ENCODE measurements at regions of chr14 and their contacts with region 1.

Region 1: DNA sequence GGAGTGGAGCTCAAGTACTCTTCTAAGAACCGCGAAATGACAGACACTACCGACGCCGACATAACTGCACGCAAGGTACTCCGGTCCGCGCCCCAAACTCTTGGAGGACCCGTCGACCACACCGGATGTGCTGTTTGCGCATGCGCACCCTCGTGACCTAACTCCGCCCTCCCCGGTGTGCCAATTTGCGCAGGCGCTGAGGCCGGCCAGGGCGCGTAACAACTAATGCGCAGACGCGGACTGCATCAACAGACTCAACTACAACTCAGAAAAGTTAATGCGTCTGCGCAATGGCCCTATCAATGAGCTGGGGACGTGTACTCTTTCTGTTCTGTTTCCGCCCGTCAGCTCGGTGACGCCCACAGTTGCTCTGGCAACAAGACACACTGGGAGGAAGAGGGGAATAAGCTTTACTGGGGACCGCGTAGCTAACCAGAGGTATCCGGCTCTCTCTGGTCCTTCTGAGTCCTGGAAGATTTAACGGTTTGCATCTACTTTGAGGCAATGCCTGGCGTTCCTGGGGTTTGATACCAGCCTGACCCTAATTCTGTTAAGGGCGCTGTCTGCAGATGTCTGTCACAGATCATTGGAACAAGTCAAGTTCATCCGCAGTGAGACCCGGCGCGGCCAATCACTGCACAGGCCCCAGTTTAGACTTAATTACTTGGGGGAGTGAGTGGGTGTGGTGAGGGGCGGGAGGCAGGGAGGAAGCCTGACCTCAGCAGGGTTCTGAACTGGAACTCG is at the start of gene DAD1:
- DNase-seq: peak; percentile 100
- ATAC-seq: peak; percentile 84
- H3K4me3 Mint-ChIP-seq: peak within 1 kb of the TSS; percentile 93
- H3K27ac Mint-ChIP-seq: peak within 1 kb of the TSS; percentile 97
- H3K4me1 Mint-ChIP-seq: peaks cover 72% of the 10 kb centered on the region
- H3K27me3 Mint-ChIP-seq: peaks cover 1% of the 10 kb centered on the region
- total RNA-seq, gene DAD1: 265 to 302 TPM

Region 2: GRCh38 chr14:22653012-22653621 is 63.8 kb after region 1 on chr14:
- CTCF ChIA-PET with region 1: interaction called, 17 read pairs
- POLR2A ChIA-PET with region 1: interaction called, 3 read pairs
- intact Hi-C with region 1: no loop called
- DNase-seq: peak; percentile 75
- ATAC-seq: peak; percentile 80
- H3K4me3 Mint-ChIP-seq: no peak overlapping the region
- H3K27ac Mint-ChIP-seq: no peak overlapping the region
- H3K4me1 Mint-ChIP-seq: no peaks in the 10 kb centered on the region
- H3K27me3 Mint-ChIP-seq: no peaks in the 10 kb centered on the region

Region 3: DNA sequence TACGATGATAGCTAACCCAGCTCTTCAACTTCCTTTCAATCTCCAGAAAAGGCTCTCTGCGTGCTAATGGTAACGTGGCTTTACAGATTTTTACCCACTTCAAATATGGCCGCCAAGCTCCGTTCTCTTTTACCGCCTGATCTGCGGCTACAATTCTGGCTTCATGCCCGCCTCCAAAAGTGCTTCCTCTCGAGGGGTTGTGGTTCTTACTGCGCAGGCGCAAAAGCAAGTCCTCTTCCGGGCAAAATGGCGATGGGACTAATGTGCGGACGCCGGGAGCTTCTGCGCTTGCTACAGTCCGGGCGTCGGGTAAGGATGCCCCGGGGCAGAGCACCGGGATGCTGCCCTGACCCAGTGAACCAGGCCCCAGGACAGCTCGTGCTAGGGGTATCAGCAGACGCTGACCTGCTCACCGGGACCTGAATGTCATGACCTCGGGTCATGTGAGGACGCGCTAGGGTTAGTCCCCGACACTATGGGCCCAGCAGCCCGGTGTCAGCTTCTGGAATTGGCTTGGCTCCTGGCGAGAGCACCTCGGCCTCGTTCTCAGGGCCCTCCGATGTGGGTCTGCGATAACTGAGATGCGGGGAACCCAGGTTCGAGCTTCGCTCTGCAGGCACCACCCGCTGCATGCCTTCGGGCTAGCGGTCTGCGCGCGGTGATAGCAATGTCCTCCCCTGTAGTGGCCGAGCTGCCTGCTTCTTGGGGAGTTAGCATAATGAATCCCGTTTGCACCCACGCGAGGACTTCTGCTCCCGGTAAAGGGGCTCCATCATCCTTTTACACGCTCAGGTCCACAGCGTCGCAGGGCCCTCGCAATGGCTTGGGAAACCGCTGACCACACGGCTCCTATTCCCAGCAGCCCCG is 177.4 kb after region 1 on chr14 and contains the start of gene OXA1L:
- CTCF ChIA-PET with region 1: interaction called, 6 read pairs
- POLR2A ChIA-PET with region 1: interaction called, 10 read pairs
- intact Hi-C with region 1: loop called (anchors 1 kb)
- DNase-seq: peak; percentile 98
- ATAC-seq: peak; percentile 87
- H3K4me3 Mint-ChIP-seq: peak within 1 kb of the TSS; percentile 90
- H3K27ac Mint-ChIP-seq: peak within 1 kb of the TSS; percentile 99
- H3K4me1 Mint-ChIP-seq: peaks cover 32% of the 10 kb centered on the region
- H3K27me3 Mint-ChIP-seq: no peaks in the 10 kb centered on the region
- total RNA-seq, gene OXA1L: 136 to 148 TPM

Region 4: DNA sequence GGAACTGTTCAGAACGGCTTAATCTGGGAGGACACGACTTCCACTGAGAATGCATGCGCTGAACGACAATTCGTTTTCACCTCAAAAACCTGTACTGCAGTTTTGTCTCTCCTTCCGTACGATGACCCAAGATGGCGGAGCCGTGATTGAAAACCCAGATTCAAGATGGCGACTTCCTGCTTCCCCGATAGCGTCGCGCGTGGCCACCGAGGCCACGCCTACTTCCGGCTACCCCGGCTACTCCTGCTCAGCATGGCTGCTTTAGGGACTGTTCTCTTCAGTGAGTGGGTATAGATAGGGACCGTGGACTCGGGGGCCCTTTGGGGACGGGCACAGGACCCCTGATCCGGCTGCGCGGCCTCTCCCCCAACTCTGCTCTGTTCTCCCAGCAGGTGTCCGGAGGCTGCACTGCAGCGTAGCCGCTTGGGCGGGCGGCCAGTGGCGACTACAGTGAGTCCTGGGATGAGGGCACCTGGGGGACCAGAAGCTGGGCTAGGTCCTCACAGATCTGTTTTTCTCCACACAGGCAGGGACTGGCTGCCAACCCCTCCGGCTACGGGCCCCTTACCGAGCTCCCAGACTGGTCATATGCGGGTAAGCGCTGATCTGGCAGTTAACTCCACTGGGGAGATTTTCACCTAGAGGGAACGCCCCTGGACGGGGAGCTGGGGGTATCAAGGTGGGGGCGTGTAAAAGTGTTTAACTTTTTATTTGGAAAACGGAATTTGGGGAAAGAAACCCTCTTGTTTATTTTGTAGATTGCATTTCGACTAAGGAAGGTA is 240.6 kb after region 1 on chr14 and contains the start of gene MRPL52:
- CTCF ChIA-PET with region 1: interaction called, 3 read pairs
- POLR2A ChIA-PET with region 1: interaction called, 3 read pairs
- intact Hi-C with region 1: loop called in 1 of 2 experiments (anchors 1 kb)
- DNase-seq: peak; percentile 94
- ATAC-seq: peak; percentile 92
- H3K4me3 Mint-ChIP-seq: peak within 1 kb of the TSS; percentile 82
- H3K27ac Mint-ChIP-seq: peak within 1 kb of the TSS; percentile 98
- H3K4me1 Mint-ChIP-seq: peaks cover 26% of the 10 kb centered on the region
- H3K27me3 Mint-ChIP-seq: no peaks in the 10 kb centered on the region
- total RNA-seq, gene MRPL52: 115 to 136 TPM

Region 5: GRCh38 chr14:22910916-22911315 is 321.6 kb after region 1 on chr14:
- CTCF ChIA-PET with region 1: no interaction called
- POLR2A ChIA-PET with region 1: no interaction called
- intact Hi-C with region 1: no loop called
- DNase-seq: no peak
- ATAC-seq: peak; percentile 68
- H3K4me3 Mint-ChIP-seq: no peak overlapping the region
- H3K27ac Mint-ChIP-seq: no peak overlapping the region
- H3K4me1 Mint-ChIP-seq: peaks cover 36% of the 10 kb centered on the region
- H3K27me3 Mint-ChIP-seq: no peaks in the 10 kb centered on the region

Region 6: GRCh38 chr14:22929104-22929847 is 340.0 kb after region 1 on chr14 and contains the start of gene PRMT5:
- CTCF ChIA-PET with region 1: interaction called, 3 read pairs
- POLR2A ChIA-PET with region 1: interaction called, 3 read pairs
- intact Hi-C with region 1: loop called (anchors 1 to 5 kb)
- DNase-seq: peak; percentile 99
- ATAC-seq: peak; percentile 98
- H3K4me3 Mint-ChIP-seq: no peak within 1 kb of the TSS
- H3K27ac Mint-ChIP-seq: no peak within 1 kb of the TSS
- H3K4me1 Mint-ChIP-seq: peaks cover 39% of the 10 kb centered on the region
- H3K27me3 Mint-ChIP-seq: no peaks in the 10 kb centered on the region
- total RNA-seq, gene PRMT5: 121 to 151 TPM

Region 7: GRCh38 chr14:23034483-23035302 is 445.4 kb after region 1 on chr14 and contains the start of gene PSMB5:
- CTCF ChIA-PET with region 1: no interaction called
- POLR2A ChIA-PET with region 1: no interaction called
- intact Hi-C with region 1: loop called in 1 of 2 experiments (anchors 10 kb)
- DNase-seq: peak; percentile 94
- ATAC-seq: peak; percentile 95
- H3K4me3 Mint-ChIP-seq: peak within 1 kb of the TSS; percentile 97
- H3K27ac Mint-ChIP-seq: peak within 1 kb of the TSS; percentile 97
- H3K4me1 Mint-ChIP-seq: peaks cover 36% of the 10 kb centered on the region
- H3K27me3 Mint-ChIP-seq: no peaks in the 10 kb centered on the region
- total RNA-seq, gene PSMB5: 104 to 129 TPM